Transverse colon (tissue), 4 donors: ENCODE measurements at regions of chr19 and their contacts with region 1.

Region 1: DNA sequence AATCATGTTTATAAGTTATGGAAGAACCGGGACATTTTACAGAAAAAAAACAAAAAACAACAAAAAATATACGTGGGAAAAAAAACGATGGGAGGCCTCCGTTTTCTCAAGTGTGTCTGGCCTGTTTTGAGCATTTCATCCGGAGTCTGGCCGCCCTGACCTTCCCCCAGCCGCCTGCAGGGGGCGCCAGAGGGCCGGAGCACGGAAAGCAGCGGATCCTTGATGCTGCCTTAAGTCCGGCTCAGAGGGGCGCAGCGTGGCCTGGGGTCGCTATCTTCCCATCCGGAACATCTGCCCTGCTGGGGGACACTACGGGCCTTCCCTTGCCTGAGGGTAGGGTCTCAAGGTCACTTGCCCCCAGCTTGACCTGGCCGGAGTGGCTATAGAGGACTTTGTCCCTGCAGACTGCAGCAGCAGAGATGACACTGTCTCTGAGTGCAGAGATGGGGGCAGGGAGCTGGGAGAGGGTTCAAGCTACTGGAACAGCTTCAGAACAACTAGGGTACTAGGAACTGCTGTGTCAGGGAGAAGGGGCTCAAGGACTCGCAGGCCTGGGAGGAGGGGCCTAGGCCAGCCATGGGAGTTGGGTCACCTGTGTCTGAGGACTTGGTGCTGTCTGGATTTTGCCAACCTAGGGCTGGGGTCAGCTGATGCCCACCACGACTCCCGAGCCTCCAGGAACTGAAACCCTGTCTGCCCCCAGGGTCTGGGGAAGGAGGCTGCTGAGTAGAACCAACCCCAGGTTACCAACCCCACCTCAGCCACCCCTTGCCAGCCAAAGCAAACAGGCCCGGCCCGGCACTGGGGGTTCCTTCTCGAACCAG is 1.8 kb upstream of the APOE start:
- DNase-seq: peak; percentile 76
- H3K4me3 ChIP-seq: no peak overlapping the region
- H3K27ac ChIP-seq: no peak overlapping the region
- H3K4me1 ChIP-seq: peaks cover 0 to 27% (median 14%) of the 10 kb centered on the region in 4 donors
- H3K27me3 ChIP-seq: peaks cover 30% of the 10 kb centered on the region
- CTCF ChIP-seq: peak; percentile 96 to 100 (median 99)
- EP300 ChIP-seq: no peak
- POLR2A ChIP-seq: no peak

Region 2: GRCh38 chr19:44662691-44663385 is 241.0 kb before region 1 on chr19:
- in situ Hi-C with region 1: no loop called
- intact Hi-C with region 1: no loop called
- DNase-seq: no peak
- H3K4me3 ChIP-seq: no peak overlapping the region
- H3K27ac ChIP-seq: no peak overlapping the region
- H3K4me1 ChIP-seq: no peaks in the 10 kb centered on the region
- H3K27me3 ChIP-seq: no peaks in the 10 kb centered on the region
- CTCF ChIP-seq: no peak
- EP300 ChIP-seq: no peak
- POLR2A ChIP-seq: no peak

Region 3: GRCh38 chr19:44943801-44944249 is 40.0 kb after region 1 on chr19:
- in situ Hi-C with region 1: no loop called
- intact Hi-C with region 1: loop called (anchors 5 kb)
- DNase-seq: peak; percentile 60
- H3K4me3 ChIP-seq: no peak overlapping the region
- H3K27ac ChIP-seq: no peak overlapping the region
- H3K4me1 ChIP-seq: no peaks in the 10 kb centered on the region
- H3K27me3 ChIP-seq: no peaks in the 10 kb centered on the region
- CTCF ChIP-seq: no peak
- EP300 ChIP-seq: no peak
- POLR2A ChIP-seq: no peak

Region 4: GRCh38 chr19:44954824-44955586 is 51.2 kb after region 1 on chr19 and contains the start of gene CLPTM1:
- in situ Hi-C with region 1: loop called in 1 of 4 experiments (anchors 5 kb)
- intact Hi-C with region 1: loop called (anchors 2 kb)
- DNase-seq: peak; percentile 97
- H3K4me3 ChIP-seq: peak within 1 kb of the TSS; percentile 70 to 95 (median 88)
- H3K27ac ChIP-seq: peak within 1 kb of the TSS; percentile 87 to 95 (median 93)
- H3K4me1 ChIP-seq: peaks cover 17 to 42% (median 25%) of the 10 kb centered on the region in 4 donors
- H3K27me3 ChIP-seq: no peaks in the 10 kb centered on the region
- CTCF ChIP-seq: peak in 2 of 5 experiments; percentile 14 to 30
- EP300 ChIP-seq: no peak
- POLR2A ChIP-seq: peak; percentile 81
- total RNA-seq, gene CLPTM1: 65.3 to 94.6 (median 79.8) TPM